ENCODE measurements at regions of chr19 and their contacts with region 1.

Region 1: DNA sequence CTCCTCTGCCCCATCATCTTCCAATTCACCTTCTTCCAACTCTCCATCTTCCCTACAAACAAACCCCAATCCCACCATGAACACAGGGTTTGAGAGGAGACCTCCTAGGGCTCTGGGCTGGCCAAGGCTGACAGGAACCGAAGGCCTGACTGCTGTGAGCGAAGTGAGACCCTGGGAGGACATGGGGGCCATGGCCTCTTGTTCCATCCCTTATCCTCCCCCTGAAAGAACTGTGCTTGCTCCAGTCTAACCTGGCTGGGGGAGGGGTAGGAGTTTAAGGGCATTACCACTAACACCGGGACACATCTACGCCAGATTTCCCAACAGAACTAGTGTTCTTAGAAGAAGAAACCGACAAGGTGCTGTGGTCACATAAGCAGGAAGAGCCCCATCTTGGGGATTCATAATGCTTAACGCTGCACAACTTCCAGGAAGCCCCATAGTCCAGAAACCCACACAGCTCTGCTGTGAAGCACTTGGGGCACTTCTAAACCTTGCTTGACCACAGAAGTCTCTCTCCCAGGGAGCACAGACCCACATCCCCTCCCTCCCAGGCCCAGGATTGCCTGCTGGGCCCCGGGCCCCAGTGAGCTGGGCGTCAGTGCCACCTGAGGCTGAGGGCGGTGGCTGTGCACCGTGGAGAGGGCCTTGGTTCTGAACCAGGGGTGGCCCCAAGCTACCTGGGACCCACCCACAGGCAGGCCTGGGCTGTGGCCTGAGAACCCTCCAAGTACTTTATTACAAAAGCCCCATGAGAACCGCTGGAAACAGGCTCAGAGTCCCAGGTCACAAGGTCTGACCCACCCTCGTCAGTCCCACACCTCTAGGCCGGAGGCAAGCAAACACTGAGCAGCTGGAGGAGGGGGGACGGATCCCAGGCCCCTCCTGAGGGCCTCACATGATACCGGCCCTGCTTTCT is 18.8 kb downstream of the ZC3H4 start:
- DNase-seq: peak; percentile 53
- H3K4me3 Mint-ChIP-seq: peak overlapping the region; percentile 69
- H3K27ac Mint-ChIP-seq: peak overlapping the region; percentile 90
- H3K4me1 Mint-ChIP-seq: peaks cover 73% of the 10 kb centered on the region
- H3K27me3 Mint-ChIP-seq: no peaks in the 10 kb centered on the region

Region 2: DNA sequence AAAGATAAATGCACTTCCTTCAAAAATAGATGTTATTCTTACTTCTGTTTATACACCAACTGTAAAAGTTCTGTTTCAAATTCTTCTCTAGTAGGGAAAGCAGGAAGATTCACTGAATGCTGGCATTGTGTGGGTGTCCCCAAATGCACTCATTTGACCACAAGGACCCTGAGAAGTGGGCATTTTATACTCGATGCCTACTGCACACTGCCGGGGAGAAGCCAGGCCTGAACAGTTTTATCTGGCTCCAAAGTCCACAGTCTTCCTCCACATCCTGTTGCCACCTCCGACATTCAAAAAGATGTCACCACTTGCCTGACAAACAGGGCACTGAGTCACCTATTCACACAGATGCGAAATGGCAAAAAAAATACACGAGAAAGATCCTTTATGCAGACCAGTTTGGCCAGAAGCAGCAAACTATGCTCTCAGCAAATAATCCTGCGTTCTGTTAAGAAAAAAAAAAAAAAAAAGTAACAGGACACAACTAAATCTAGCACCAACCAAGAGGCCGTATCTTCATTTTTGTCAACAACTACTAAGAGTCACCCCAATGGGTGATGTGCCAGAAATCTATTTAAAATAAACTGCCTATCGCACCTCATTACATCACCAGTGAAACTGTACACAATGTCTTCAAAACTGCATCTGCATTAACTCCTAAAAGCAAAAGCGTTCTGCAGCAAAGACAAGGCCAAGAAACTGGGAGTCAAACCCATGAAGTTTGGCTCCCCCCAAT is 12.6 kb after region 1 on chr19:
- CTCF ChIA-PET with region 1: interaction called, 20 read pairs
- POLR2A ChIA-PET with region 1: interaction called, 33 read pairs
- DNase-seq: peak; percentile 55
- H3K4me3 Mint-ChIP-seq: peak overlapping the region; percentile 93
- H3K27ac Mint-ChIP-seq: peak overlapping the region; percentile 100
- H3K4me1 Mint-ChIP-seq: peaks cover 64% of the 10 kb centered on the region
- H3K27me3 Mint-ChIP-seq: no peaks in the 10 kb centered on the region

Region 3: DNA sequence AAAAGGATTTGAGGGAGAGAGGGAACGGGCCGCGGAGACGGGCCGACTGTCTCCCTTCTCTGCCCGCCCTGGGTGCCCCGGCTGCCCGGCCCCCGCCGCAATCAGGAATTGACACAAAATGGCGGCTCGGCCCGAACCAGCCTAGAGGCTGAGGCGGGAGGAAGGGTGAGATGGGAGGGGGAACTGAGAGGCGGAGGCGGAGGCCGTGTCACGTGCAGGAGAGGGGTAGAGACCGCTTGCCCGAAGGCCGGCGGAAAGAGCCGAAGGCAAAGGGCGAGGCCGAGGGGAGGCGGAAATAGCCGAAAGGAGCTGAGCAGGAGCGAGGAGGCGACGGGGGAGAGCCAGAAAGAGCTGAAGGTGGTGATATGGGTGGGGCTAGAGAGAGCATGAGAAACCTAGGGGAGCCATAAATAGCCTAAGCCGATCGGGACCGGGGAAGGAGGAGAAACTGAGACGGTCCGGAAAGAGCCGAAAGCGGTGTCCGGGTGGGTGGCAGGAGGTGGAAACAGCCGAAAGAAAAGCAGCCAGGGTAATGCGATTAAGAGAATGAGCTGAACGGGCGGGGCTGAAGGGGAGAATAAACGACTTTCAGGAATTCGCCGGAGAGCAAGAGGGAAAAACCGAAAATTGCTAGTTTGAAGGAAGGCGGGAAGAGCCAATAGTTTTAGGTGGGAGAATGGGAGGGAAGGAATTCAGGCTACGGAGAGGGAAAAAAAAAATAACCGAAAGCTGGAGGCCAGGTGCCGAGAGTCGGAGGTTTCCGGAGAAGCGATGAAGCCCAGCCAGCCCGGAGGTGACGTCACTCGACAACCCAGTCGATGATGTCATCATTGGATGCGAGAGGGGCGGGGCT is 18.4 kb after region 1 on chr19 and contains the start of gene ZC3H4:
- CTCF ChIA-PET with region 1: interaction called, 20 read pairs
- POLR2A ChIA-PET with region 1: interaction called, 33 read pairs
- DNase-seq: peak; percentile 100
- H3K4me3 Mint-ChIP-seq: peak within 1 kb of the TSS; percentile 93
- H3K27ac Mint-ChIP-seq: peak within 1 kb of the TSS; percentile 100
- H3K4me1 Mint-ChIP-seq: peaks cover 29% of the 10 kb centered on the region
- H3K27me3 Mint-ChIP-seq: no peaks in the 10 kb centered on the region
- total RNA-seq, gene ZC3H4: 99.5 to 115 TPM